PC-3 (cell line): ENCODE measurements at regions of chr17 and their contacts with region 1.

Region 1: DNA sequence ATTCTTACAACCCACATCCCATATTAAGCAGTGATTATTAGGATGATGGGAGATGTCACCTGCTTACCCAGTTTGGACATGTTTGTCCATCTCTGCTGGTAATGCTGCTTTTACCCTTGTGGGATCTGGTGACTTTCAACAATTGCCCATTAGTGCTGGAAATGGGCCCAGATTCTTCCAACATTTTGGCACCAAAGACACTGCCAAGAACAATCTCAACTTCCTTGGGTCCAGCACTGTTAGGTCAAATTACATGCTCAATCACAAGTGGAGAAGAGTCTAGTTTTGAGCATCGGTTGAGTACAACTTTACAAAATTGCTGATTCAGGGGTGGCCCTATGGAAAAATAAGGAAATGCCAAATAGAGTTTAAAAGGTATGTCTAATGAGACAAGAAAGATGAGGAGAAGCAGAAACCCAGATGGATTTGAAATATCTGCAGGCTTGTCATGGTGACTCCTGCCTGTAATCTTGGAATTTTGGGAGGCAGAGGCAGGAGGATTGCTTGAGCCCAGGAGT is 13.0 kb upstream of the ZFP3 start:
- DNase-seq: no peak
- ATAC-seq: no peak
- H3K4me3 ChIP-seq: no peak overlapping the region
- H3K27ac ChIP-seq: no peak overlapping the region
- H3K4me1 ChIP-seq: no peaks in the 10 kb centered on the region
- H3K27me3 ChIP-seq: no peaks in the 10 kb centered on the region
- CTCF ChIP-seq: no peak

Region 2: DNA sequence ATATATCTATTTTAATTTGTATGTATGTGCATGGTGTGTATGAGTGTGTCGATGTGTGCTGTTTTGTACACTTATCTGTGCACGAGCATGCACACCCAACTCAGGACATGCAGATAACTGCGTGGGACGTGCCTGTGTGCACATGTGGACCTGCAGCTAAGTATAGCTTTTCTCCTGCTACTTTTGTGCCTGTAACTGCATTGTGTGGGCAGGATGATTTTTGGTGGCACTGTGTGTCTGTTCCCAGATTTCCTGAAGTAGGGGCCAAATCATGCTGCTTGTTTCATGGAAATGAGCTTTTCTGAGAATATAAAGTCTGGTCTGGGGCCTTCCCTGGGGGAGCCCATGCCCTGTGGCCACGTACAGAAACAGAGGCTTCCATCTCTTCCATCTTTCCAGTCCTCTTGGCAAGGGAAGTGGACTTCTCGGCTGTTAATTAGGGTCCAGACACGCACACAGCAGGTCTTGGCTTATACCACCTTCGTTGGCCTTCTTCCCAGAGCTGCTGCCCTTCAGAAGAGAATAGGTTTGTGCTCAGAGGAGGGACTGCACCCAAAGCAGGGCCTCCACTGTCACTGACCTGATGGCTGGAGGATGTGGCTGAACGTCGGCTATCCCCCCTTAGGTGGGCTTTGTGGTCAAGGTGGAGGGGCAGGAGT is 601.3 kb before region 1 on chr17:
- CTCF ChIA-PET with region 1: no interaction called
- POLR2A ChIA-PET with region 1: no interaction called
- intact Hi-C with region 1: no loop called
- DNase-seq: no peak
- ATAC-seq: no peak
- H3K4me3 ChIP-seq: no peak overlapping the region
- H3K27ac ChIP-seq: no peak overlapping the region
- H3K4me1 ChIP-seq: no peaks in the 10 kb centered on the region
- H3K27me3 ChIP-seq: no peaks in the 10 kb centered on the region
- CTCF ChIP-seq: no peak

Region 3: GRCh38 chr17:4980644-4981216 is 84.6 kb before region 1 on chr17:
- CTCF ChIA-PET with region 1: interaction called, 4 read pairs
- POLR2A ChIA-PET with region 1: no interaction called
- intact Hi-C with region 1: loop called (anchors 1 kb)
- DNase-seq: peak; percentile 65
- ATAC-seq: peak; percentile 37; the same call in 1 of the 2 replicates
- H3K4me3 ChIP-seq: no peak overlapping the region
- H3K27ac ChIP-seq: no peak overlapping the region
- H3K4me1 ChIP-seq: no peaks in the 10 kb centered on the region
- H3K27me3 ChIP-seq: no peaks in the 10 kb centered on the region
- CTCF ChIP-seq: peak; percentile 71

Region 4: GRCh38 chr17:5000237-5000639 is 65.0 kb before region 1 on chr17:
- CTCF ChIA-PET with region 1: no interaction called
- POLR2A ChIA-PET with region 1: no interaction called
- intact Hi-C with region 1: no loop called
- DNase-seq: no peak
- ATAC-seq: no peak
- H3K4me3 ChIP-seq: no peak overlapping the region
- H3K27ac ChIP-seq: no peak overlapping the region
- H3K4me1 ChIP-seq: 0 out of 2 replicates have a peak, but pooled peaks cover 9% of the 10 kb centered on the region
- H3K27me3 ChIP-seq: no peaks in the 10 kb centered on the region
- CTCF ChIP-seq: no peak

Region 5: DNA sequence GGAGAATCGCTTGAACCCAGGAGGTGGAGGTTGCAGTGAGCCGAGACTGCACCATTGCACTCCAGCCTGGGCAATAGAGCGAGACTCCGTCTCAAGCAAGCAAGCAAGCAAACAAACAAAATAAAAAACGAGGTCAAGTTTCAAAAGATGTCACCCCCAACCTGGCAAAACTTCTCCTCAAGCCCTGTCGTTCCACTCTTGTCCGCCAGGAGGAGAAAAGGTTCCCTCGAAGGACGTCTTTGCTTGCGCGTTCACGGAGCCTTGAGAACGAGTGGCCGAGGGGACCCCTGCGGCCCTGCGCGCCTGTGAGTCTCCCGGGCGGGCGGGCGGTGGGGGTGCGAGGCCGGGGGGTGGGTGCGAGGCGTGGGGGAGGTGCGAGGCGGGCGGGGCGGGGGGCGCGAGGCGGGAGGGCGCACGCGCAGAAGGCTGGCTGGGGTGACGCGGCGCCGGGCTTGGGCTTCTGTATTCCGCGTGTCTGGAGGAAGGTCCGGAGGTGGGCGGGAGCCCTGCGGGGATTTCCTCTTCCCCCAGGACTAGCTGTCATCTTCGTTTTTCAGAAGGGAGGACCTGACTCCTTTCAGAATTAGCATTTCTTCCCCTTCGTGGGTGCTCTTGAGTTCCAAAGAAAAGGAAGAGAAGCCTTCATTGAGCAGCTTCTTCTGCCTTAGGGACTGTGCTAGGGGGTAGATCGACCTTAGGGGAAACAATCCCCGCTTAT is 33.8 kb before region 1 on chr17:
- CTCF ChIA-PET with region 1: interaction called, 4 read pairs
- POLR2A ChIA-PET with region 1: no interaction called
- intact Hi-C with region 1: loop called (anchors 1 kb)
- DNase-seq: peak; percentile 78
- ATAC-seq: peak; percentile 74
- H3K4me3 ChIP-seq: peak overlapping the region; percentile 58
- H3K27ac ChIP-seq: no peak overlapping the region
- H3K4me1 ChIP-seq: 0 out of 2 replicates have a peak, but pooled peaks cover 3% of the 10 kb centered on the region
- H3K27me3 ChIP-seq: no peaks in the 10 kb centered on the region
- CTCF ChIP-seq: peak; percentile 48

Region 6: DNA sequence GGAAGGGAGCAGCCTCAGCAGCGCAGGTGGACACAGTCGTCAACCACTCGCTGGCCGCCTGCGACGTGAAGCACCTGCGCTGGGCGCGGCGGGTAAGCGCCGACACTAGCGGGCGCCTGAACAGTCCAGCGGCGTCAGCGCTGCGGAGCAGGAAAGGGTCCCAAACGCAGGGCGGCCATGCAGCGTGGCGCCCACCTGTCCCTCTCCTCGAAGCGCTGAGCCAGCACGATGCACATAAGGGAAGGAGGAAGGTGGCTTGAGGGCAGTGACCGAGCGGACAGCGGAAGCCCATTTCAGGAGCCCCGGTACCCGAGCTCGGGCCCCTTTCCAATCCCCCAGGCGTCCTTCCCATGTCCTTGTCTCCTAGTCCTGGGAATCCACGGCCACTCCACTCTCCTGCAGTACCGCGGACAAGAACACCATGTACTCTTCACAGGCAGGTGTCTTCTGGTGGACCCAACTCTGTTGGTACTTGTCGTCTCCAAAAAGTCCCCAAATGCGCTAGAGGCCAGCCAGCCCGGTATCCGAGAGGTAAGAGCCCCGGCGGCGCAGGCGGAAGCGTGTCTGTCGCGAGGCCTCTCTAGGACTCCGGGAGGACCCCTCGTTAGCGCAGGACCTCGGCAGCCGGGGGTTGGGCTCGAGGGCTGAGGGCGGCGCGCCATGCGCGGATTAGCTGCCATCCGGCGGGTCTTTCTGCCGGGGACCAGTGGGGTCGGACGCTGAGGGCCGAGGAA is 32.0 kb after region 1 on chr17:
- CTCF ChIA-PET with region 1: no interaction called
- POLR2A ChIA-PET with region 1: no interaction called
- intact Hi-C with region 1: no loop called
- DNase-seq: no peak
- ATAC-seq: no peak
- H3K4me3 ChIP-seq: no peak overlapping the region
- H3K27ac ChIP-seq: no peak overlapping the region
- H3K4me1 ChIP-seq: no peaks in the 10 kb centered on the region
- H3K27me3 ChIP-seq: no peaks in the 10 kb centered on the region
- CTCF ChIP-seq: no peak